Panc1 (cell line): ENCODE measurements at regions of chr19 and their contacts with region 1.

Region 1: GRCh38 chr19:33022472-33023116 is 42.1 kb downstream of the RHPN2 start:
- DNase-seq: no peak
- ATAC-seq: peak; percentile 7; the same call in 1 of the 2 replicates
- H3K4me3 ChIP-seq: no peak overlapping the region
- H3K27ac ChIP-seq: no peak overlapping the region; the same call in 1 of the 2 replicates
- H3K4me1 ChIP-seq: no peaks in the 10 kb centered on the region
- H3K27me3 ChIP-seq: no peaks in the 10 kb centered on the region
- CTCF ChIP-seq: no peak

Region 2: DNA sequence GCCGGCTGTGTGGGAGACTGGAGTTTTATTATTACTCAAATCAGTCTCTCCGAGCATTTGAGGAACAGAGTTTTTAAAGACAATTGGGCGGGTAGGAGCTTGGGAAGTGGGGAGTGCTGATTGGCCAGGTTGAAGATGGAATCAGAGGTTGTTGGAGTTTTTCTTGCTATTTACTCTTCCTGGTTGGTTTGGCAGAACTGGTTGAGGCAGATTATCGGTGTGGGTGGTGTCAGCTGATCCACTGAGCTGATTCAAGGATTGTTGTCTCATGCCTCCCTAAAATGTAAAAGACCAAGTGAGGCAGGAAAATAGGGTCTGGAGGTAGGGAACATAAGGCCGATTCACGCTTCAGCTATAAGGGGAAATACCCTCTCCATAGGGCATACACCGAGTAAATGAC is 304.3 kb before region 1 on chr19:
- CTCF ChIA-PET with region 1: no interaction called
- POLR2A ChIA-PET with region 1: interaction called, 11 read pairs
- in situ Hi-C with region 1: no loop called
- intact Hi-C with region 1: no loop called
- DNase-seq: no peak
- ATAC-seq: no peak
- H3K4me3 ChIP-seq: no peak overlapping the region
- H3K27ac ChIP-seq: no peak overlapping the region
- H3K4me1 ChIP-seq: no peaks in the 10 kb centered on the region
- H3K27me3 ChIP-seq: no peaks in the 10 kb centered on the region
- CTCF ChIP-seq: no peak